ENCODE measurements at regions of chr9 and their contacts with region 1.

Region 1: GRCh38 chr9:98848450-98849149 is 41.1 kb downstream of the GALNT12 start:
- DNase-seq: peak; percentile 35 to 82 (median 62)
- ATAC-seq: peak; percentile 87 to 94 (median 90)
- H3K4me3 ChIP-seq: no peak overlapping the region
- H3K4me3 Mint-ChIP-seq: no peak overlapping the region
- H3K27ac ChIP-seq: no peak overlapping the region
- H3K27ac Mint-ChIP-seq: peak overlapping the region; percentile 13 to 30
- H3K4me1 ChIP-seq: peaks cover 0 to 3% of the 10 kb centered on the region in 2 experiments
- H3K4me1 Mint-ChIP-seq: peaks cover 6 to 10% (median 7%) of the 10 kb centered on the region in 3 donors
- H3K27me3 ChIP-seq: no peaks in the 10 kb centered on the region
- H3K27me3 Mint-ChIP-seq: no peaks in the 10 kb centered on the region

Region 2: GRCh38 chr9:97528529-97529230 is 1319.9 kb before region 1 on chr9:
- CTCF ChIA-PET with region 1: interaction called in 1 of 2 experiments, 10 read pairs
- POLR2A ChIA-PET with region 1: no interaction called
- DNase-seq: no peak
- ATAC-seq: no peak
- H3K4me3 ChIP-seq: no peak overlapping the region
- H3K4me3 Mint-ChIP-seq: no peak overlapping the region
- H3K27ac ChIP-seq: no peak overlapping the region
- H3K27ac Mint-ChIP-seq: no peak overlapping the region
- H3K4me1 ChIP-seq: no peaks in the 10 kb centered on the region
- H3K4me1 Mint-ChIP-seq: no peaks in the 10 kb centered on the region
- H3K27me3 ChIP-seq: no peaks in the 10 kb centered on the region
- H3K27me3 Mint-ChIP-seq: no peaks in the 10 kb centered on the region

Region 3: GRCh38 chr9:98899408-98900056 is 50.9 kb after region 1 on chr9:
- CTCF ChIA-PET with region 1: interaction called in 1 of 2 experiments, 14 read pairs
- POLR2A ChIA-PET with region 1: no interaction called
- DNase-seq: peak in 2 of 35 experiments; percentile 6 to 12
- ATAC-seq: peak in 1 of 4 experiments; percentile 35
- H3K4me3 ChIP-seq: no peak overlapping the region
- H3K4me3 Mint-ChIP-seq: no peak overlapping the region
- H3K27ac ChIP-seq: no peak overlapping the region
- H3K27ac Mint-ChIP-seq: no peak overlapping the region
- H3K4me1 ChIP-seq: no peaks in the 10 kb centered on the region
- H3K4me1 Mint-ChIP-seq: peaks cover 3 to 8% (median 5%) of the 10 kb centered on the region in 3 donors
- H3K27me3 ChIP-seq: peaks cover 0 to 10% of the 10 kb centered on the region in 2 experiments
- H3K27me3 Mint-ChIP-seq: peaks cover 15 to 21% of the 10 kb centered on the region in 2 donors

Region 4: DNA sequence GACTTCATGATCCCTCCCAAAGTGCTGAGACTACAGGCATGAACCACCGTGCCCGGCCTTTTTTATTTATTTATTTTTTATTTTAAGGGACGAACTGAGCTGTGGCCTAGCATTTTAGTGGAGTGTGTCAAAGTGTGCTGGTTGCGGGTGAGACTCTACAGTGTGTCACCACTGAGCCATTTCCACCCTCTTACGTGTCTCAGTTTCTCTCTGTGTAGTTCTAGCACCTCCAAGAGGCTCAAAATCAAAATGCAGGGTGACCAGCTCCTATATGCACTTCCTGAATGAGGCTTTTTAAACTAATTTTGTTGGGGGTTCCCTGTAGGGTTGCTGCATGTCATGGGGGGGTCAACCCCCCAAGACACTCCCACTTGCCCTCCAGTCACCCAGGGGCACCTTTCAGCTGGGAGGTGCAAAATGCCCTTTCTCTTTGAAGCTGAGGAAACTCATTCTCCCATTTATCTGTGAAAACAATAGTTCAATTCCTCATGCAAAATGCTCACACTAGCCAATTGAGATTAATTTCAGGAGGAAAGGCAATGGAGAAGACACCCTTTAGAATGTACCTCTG is 164.4 kb after region 1 on chr9:
- CTCF ChIA-PET with region 1: interaction called in 1 of 2 experiments, 13 read pairs
- POLR2A ChIA-PET with region 1: no interaction called
- DNase-seq: peak in 7 of 35 experiments; percentile 5 to 42 (median 10)
- ATAC-seq: peak in 2 of 4 experiments; percentile 36 to 48
- H3K4me3 ChIP-seq: no peak overlapping the region
- H3K4me3 Mint-ChIP-seq: peak overlapping the region in 2 of 3 donors; percentile 44 to 55
- H3K27ac ChIP-seq: peak overlapping the region; percentile 77
- H3K27ac Mint-ChIP-seq: peak overlapping the region; percentile 91 to 94
- H3K4me1 ChIP-seq: peaks cover 15 to 19% of the 10 kb centered on the region in 2 experiments
- H3K4me1 Mint-ChIP-seq: peaks cover 19 to 27% (median 27%) of the 10 kb centered on the region in 3 donors
- H3K27me3 ChIP-seq: no peaks in the 10 kb centered on the region
- H3K27me3 Mint-ChIP-seq: no peaks in the 10 kb centered on the region

Region 5: DNA sequence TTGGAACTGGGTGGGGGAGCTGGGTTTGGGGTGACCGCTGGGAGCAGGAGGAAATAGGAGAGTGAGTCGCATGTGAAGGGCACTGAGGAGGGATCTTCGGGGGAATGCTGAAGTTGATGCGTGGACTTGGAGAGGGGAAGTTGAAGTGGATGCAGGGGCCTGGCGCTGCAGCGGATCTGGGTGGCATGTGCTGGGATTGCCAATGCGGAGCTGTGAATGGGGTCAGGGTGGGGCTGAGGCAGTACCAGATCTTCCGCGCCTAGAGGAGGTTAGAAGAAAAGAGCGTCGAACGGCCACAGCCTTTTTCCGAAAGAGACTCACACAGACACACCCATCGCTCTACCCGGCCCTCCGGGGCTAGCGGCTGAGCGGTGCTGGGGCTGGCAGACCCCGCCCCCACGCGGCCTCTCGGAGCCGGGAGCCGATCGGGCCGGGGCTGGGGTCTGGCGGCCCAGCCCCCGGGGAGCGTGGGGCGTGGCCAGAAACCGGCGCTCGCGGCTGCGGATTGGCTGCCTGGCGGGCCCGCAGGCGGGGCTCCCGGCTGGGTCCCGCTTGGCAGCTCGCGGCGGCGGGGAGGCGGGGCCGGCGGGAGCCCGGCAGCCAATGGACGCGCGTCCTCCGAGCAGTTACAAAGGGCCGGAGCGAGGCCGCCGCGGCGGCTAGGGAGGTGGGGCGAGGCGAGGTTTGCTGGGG is 256.0 kb after region 1 on chr9 and contains the start of gene TGFBR1:
- CTCF ChIA-PET with region 1: interaction called in 1 of 2 experiments, 10 read pairs
- POLR2A ChIA-PET with region 1: no interaction called
- DNase-seq: peak; percentile 75 to 95 (median 87)
- ATAC-seq: peak; percentile 86 to 91 (median 88)
- H3K4me3 ChIP-seq: peak within 1 kb of the TSS; percentile 85 to 86
- H3K4me3 Mint-ChIP-seq: peak within 1 kb of the TSS; percentile 90 to 94 (median 92)
- H3K27ac ChIP-seq: peak within 1 kb of the TSS; percentile 74
- H3K27ac Mint-ChIP-seq: peak within 1 kb of the TSS; percentile 95 to 97
- H3K4me1 ChIP-seq: peaks cover 37% of the 10 kb centered on the region in 2 experiments
- H3K4me1 Mint-ChIP-seq: peaks cover 53 to 68% (median 61%) of the 10 kb centered on the region in 3 donors
- H3K27me3 ChIP-seq: no peaks in the 10 kb centered on the region
- H3K27me3 Mint-ChIP-seq: no peaks in the 10 kb centered on the region
- total RNA-seq, gene TGFBR1: 22.3 to 36.9 (median 31.7) TPM

Region 6: GRCh38 chr9:99803694-99804093 is 955.1 kb after region 1 on chr9:
- CTCF ChIA-PET with region 1: no interaction called
- POLR2A ChIA-PET with region 1: no interaction called
- DNase-seq: no peak
- ATAC-seq: no peak
- H3K4me3 ChIP-seq: no peak overlapping the region
- H3K4me3 Mint-ChIP-seq: no peak overlapping the region
- H3K27ac ChIP-seq: no peak overlapping the region
- H3K27ac Mint-ChIP-seq: no peak overlapping the region
- H3K4me1 ChIP-seq: peaks cover 0 to 2% of the 10 kb centered on the region in 2 experiments
- H3K4me1 Mint-ChIP-seq: peaks cover 4 to 5% (median 4%) of the 10 kb centered on the region in 3 donors
- H3K27me3 ChIP-seq: no peaks in the 10 kb centered on the region
- H3K27me3 Mint-ChIP-seq: no peaks in the 10 kb centered on the region

Measured in T-cell (primary cell).